Head of caudate nucleus (tissue), 42 donors: ENCODE measurements at regions of chr22 and their contacts with region 1.

Region 1: GRCh38 chr22:19679522-19680101 is 34.7 kb upstream of the SEPTIN5 start:
- DNase-seq: peak in 29 of 42 donors; percentile 16 to 77 (median 43)

Region 2: DNA sequence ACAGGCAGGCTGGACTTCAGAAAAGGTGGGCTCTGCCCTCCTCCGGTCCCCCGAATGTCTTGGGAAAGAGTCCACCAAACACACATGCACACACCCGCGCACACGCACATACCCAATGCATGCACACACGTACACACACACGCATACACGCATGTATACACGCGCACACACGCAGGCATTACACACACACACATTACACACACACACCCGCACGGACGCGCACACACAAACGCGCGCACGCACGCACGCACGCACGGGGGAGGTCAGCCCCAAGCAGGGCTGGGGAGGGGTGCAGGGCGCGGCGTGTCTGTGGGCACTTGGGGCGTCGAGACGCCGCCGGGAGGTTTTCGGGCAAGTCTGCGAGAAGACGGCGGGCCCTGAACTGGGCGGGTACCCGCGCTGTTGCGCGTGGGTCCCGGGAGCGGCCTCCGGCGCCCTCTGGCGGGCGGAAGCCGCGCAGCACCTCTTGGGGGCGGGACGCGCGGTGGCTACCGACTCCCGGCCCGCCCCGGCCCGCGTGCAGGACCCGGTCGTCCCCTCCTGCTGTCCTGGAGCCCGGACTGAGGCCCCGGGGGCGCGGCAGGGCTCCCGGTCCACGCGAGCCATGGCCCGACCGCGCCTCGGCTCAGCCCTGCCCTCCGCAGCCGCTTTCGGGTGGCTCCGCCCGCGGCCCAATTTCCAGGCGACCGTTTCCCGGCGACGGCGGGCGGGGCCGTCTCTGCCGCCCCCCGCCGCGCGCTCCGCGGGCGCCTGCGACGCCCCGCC is 38.3 kb after region 1 on chr22:
- intact Hi-C with region 1: loop called (anchors 2 kb)
- DNase-seq: peak; percentile 33 to 89 (median 78)

Region 3: DNA sequence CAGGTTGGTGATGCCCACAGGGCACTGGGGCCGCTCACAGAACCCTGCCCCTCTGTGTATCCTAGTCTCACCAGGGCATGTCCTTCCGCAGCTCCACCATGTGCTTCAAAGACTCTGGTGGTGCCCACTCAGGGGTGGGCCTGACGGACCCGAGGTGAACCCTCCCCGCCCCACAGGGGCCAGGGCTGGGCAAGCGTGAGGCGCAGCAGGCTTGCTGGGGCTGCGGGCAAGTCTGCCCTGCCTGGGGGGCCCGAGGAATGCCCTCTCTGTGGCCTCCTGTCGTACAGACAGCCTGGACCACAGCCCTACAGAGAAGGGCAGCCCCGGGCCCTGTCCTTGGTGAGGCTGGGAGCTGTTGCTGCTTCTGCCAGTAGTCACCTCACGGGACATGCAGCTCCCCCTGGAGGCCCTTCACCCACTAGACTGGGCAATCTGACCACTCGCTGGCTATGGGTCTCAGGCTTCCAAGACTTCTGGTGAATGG is 121.2 kb after region 1 on chr22:
- intact Hi-C with region 1: no loop called
- DNase-seq: no peak